Transverse colon (tissue), 4 donors: ENCODE measurements at regions of chr16 and their contacts with region 1.

Region 1: GRCh38 chr16:30910427-30911029 is 12.8 kb upstream of the FBXL19 start:
- DNase-seq: no peak
- H3K4me3 ChIP-seq: no peak overlapping the region
- H3K27ac ChIP-seq: no peak overlapping the region
- H3K4me1 ChIP-seq: no peaks in the 10 kb centered on the region
- H3K27me3 ChIP-seq: no peaks in the 10 kb centered on the region
- CTCF ChIP-seq: no peak
- EP300 ChIP-seq: no peak
- POLR2A ChIP-seq: no peak

Region 2: DNA sequence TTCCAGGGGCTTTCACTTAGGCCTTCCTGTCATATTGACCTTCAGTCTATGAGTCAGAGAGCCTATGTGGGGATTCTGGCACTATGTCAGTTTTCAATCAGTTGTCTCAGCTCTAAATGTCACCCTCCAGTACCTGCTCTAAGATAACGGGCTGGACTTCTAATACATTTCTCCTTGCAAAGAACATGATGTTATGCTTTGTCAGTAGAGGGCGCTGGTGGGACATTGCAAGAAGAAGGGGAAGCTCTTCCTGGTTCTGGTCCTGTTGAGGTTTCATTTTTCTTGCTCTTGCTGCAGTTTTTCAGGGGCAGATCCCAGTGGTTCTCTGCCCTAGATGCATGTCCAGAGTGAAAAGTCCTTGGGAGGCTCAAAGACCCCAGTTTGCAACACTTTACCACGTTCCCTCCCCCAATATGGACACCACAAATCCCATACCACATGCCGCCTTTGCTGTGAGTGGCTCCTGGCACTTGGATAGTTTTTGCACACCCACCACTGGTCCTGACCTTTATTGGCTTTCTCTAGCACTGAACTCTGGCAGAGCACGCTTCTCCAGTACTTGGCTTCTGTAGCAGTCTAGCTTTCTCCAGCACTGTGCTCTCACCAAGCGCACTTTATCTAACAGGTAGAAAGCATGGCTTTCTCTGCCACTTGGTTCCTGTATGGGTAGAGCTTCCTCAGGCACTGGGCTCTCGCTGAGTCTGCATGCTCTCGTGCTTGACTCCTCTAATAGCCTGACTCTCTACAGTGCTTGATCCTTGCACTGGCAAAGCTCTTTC is 65.7 kb before region 1 on chr16:
- in situ Hi-C with region 1: loop called in 3 of 4 experiments (anchors 5 to 10 kb)
- intact Hi-C with region 1: loop called (anchors 5 kb)
- DNase-seq: peak; percentile 76
- H3K4me3 ChIP-seq: peak overlapping the region in 1 of 4 donors; percentile 31
- H3K27ac ChIP-seq: peak overlapping the region; percentile 56 to 71 (median 56)
- H3K4me1 ChIP-seq: peaks cover 5 to 14% (median 8%) of the 10 kb centered on the region in 4 donors
- H3K27me3 ChIP-seq: no peaks in the 10 kb centered on the region
- CTCF ChIP-seq: peak; percentile 87 to 93 (median 88)
- EP300 ChIP-seq: no peak
- POLR2A ChIP-seq: no peak

Region 3: DNA sequence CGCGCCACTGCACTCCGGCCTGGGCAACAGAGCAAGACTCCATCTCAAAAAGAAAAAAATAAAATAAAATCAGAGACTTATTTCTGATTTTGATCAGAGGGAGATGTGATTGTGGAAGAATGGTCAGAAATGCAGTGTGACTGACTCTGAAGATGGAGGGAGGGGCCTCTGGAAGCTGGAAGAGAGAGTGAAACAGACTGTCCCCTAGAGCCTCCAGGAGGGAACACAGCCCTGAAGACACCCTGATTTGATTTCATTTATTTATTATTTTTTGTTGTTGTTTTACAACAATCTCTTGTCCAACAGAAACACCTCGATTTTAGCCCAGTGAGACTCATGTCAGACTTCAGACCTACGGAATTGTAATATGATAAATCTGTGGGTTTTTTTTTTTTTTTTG is 42.8 kb before region 1 on chr16:
- in situ Hi-C with region 1: loop called in 1 of 4 experiments (anchors 5 kb)
- intact Hi-C with region 1: no loop called
- DNase-seq: no peak
- H3K4me3 ChIP-seq: no peak overlapping the region
- H3K27ac ChIP-seq: no peak overlapping the region
- H3K4me1 ChIP-seq: no peaks in the 10 kb centered on the region
- H3K27me3 ChIP-seq: no peaks in the 10 kb centered on the region
- CTCF ChIP-seq: no peak
- EP300 ChIP-seq: no peak
- POLR2A ChIP-seq: no peak